Dendritic cell treated with granulocyte-macrophage colony-stimulating factor and Interleukin-4, amounts not matched to agents 40 ng/mL and 50 ng/mL, for 4 days (primary cell): ENCODE measurements at regions of chr12 and their contacts with region 1.

Region 1: GRCh38 chr12:38782359-38782758 is 123.0 kb downstream of the CPNE8 start:
- H3K4me3 Mint-ChIP-seq: no peak overlapping the region
- H3K27ac Mint-ChIP-seq: no peak overlapping the region
- H3K4me1 Mint-ChIP-seq: no peaks in the 10 kb centered on the region
- H3K27me3 Mint-ChIP-seq: no peaks in the 10 kb centered on the region

Region 2: DNA sequence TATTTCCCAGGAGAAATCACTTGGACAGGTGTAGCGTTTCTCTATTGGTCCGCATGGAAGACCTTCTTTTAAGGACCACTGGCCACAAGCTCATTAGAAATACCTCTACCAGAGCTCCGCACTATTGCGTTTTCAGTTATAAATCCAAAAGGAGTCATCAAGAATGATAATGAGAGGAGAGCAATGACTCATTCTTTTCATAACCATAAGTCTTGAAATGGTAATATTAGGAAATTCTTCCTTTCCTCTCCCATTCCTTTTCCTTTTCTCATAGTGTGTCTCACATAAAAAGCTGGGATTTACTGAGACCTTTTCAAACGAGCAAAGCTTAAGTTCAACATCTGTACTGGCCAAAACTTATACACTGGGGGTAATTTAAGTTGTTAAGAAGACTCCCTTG is 92.7 kb before region 1 on chr12:
- intact Hi-C with region 1: no loop called
- H3K4me3 Mint-ChIP-seq: no peak overlapping the region
- H3K27ac Mint-ChIP-seq: no peak overlapping the region
- H3K4me1 Mint-ChIP-seq: no peaks in the 10 kb centered on the region
- H3K27me3 Mint-ChIP-seq: no peaks in the 10 kb centered on the region

Region 3: GRCh38 chr12:38869036-38869435 is 86.7 kb after region 1 on chr12:
- intact Hi-C with region 1: loop called (anchors 10 kb)
- H3K4me3 Mint-ChIP-seq: no peak overlapping the region
- H3K27ac Mint-ChIP-seq: no peak overlapping the region
- H3K4me1 Mint-ChIP-seq: peaks cover 17% of the 10 kb centered on the region
- H3K27me3 Mint-ChIP-seq: no peaks in the 10 kb centered on the region